Activated CD4-positive, alpha-beta memory T cell treated with anti-CD3 and anti-CD28 coated beads for 36 hours (primary cell): ENCODE measurements at regions of chr6 and their contacts with region 1.

Region 1: GRCh38 chr6:139533573-139534471 is 159.4 kb upstream of the CITED2 start:
- DNase-seq: no peak
- H3K4me3 Mint-ChIP-seq: peak overlapping the region; percentile 55
- H3K27ac Mint-ChIP-seq: peak overlapping the region; percentile 85
- H3K4me1 Mint-ChIP-seq: peaks cover 57% of the 10 kb centered on the region
- H3K27me3 Mint-ChIP-seq: no peaks in the 10 kb centered on the region

Region 2: GRCh38 chr6:139194795-139195194 is 339.0 kb before region 1 on chr6:
- CTCF ChIA-PET with region 1: no interaction called
- POLR2A ChIA-PET with region 1: no interaction called
- intact Hi-C with region 1: no loop called
- DNase-seq: no peak
- H3K4me3 Mint-ChIP-seq: no peak overlapping the region
- H3K27ac Mint-ChIP-seq: no peak overlapping the region
- H3K4me1 Mint-ChIP-seq: no peaks in the 10 kb centered on the region
- H3K27me3 Mint-ChIP-seq: no peaks in the 10 kb centered on the region

Region 3: DNA sequence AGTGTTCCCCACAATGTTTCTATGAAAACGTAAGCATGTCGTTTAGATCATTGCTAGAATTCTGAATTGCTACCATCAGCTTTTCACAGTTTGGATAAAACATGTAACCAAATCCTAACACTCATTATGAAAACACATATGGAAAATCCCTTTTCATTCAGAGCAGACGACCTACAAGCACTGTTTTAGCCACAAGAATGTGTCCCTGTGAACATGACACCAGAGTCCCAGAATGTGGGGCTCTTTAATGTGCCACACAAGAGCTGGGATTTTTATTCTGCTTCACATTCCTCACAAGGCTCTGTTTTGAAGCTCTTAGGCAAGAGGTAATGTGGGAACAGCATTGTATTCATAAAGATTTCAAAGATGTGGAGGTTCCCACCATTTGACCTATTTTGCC is 18.3 kb before region 1 on chr6:
- CTCF ChIA-PET with region 1: interaction called, 3 read pairs
- POLR2A ChIA-PET with region 1: interaction called, 8 read pairs
- intact Hi-C with region 1: loop called (anchors 1 kb)
- DNase-seq: no peak
- H3K4me3 Mint-ChIP-seq: no peak overlapping the region
- H3K27ac Mint-ChIP-seq: peak overlapping the region; percentile 76
- H3K4me1 Mint-ChIP-seq: peaks cover 32% of the 10 kb centered on the region
- H3K27me3 Mint-ChIP-seq: no peaks in the 10 kb centered on the region

Region 4: DNA sequence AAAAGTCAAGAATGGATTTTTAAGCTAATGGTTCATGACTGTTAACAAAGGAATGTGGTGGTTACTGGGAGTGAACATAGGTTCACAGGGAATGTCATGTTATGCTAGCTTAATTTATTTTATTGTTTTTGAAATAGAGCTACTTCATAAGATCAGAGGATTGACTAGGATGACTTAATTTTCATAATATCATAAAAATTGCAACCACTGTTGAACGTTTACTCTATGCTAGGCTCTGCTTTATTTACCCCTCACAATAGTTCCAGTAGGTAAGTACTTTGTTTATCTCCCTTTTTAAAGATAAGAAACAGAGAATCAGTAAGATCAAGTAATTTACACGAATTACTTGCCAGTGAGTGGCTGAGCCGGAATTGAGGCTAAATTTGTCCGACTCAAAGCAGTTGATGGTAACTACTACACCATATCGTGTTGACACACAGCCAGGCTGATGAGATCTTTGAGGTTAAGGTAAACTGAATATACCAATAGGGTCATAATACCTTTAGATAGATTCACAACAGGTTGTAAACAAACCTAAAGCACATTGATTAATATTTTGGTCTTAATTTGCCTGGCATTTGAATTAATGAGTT is 35.2 kb after region 1 on chr6:
- CTCF ChIA-PET with region 1: no interaction called
- POLR2A ChIA-PET with region 1: no interaction called
- intact Hi-C with region 1: loop called (anchors 2 kb)
- DNase-seq: no peak
- H3K4me3 Mint-ChIP-seq: no peak overlapping the region
- H3K27ac Mint-ChIP-seq: no peak overlapping the region
- H3K4me1 Mint-ChIP-seq: peaks cover 11% of the 10 kb centered on the region
- H3K27me3 Mint-ChIP-seq: no peaks in the 10 kb centered on the region

Region 5: GRCh38 chr6:139600919-139601475 is 67.2 kb after region 1 on chr6:
- CTCF ChIA-PET with region 1: interaction called, 3 read pairs
- POLR2A ChIA-PET with region 1: no interaction called
- intact Hi-C with region 1: loop called (anchors 2 kb)
- DNase-seq: peak; percentile 29
- H3K4me3 Mint-ChIP-seq: no peak overlapping the region
- H3K27ac Mint-ChIP-seq: peak overlapping the region; percentile 10
- H3K4me1 Mint-ChIP-seq: peaks cover 7% of the 10 kb centered on the region
- H3K27me3 Mint-ChIP-seq: no peaks in the 10 kb centered on the region